Tibial artery (tissue), 4 donors: ENCODE measurements at regions of chr10 and their contacts with region 1.

Region 1: DNA sequence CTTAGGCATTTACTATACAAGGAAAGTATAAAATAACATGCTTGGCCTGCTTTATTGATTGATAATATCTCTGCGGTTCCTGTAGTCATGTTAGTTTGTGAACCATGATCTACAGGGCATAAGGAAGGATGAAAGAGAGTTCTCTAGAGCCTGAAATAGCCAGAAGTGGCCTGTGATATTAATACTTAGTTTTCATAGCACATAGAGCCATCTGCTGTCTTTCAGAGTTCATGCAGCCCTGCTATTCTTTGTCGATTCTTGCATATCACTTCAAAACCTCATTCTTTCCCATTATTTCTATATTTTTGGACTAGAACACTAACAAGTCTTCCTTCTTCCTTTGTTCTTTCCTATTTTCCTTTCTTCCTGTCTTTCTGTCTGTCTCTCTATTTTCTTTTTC is 26.4 kb upstream of the PRKG1 start:
- DNase-seq: no peak
- H3K4me3 ChIP-seq: no peak overlapping the region
- H3K27ac ChIP-seq: peak overlapping the region; percentile 38 to 67
- H3K4me1 ChIP-seq: peaks cover 0 to 98% (median 23%) of the 10 kb centered on the region in 4 donors
- H3K27me3 ChIP-seq: no peaks in the 10 kb centered on the region
- CTCF ChIP-seq: peak; percentile 41 to 47

Region 2: DNA sequence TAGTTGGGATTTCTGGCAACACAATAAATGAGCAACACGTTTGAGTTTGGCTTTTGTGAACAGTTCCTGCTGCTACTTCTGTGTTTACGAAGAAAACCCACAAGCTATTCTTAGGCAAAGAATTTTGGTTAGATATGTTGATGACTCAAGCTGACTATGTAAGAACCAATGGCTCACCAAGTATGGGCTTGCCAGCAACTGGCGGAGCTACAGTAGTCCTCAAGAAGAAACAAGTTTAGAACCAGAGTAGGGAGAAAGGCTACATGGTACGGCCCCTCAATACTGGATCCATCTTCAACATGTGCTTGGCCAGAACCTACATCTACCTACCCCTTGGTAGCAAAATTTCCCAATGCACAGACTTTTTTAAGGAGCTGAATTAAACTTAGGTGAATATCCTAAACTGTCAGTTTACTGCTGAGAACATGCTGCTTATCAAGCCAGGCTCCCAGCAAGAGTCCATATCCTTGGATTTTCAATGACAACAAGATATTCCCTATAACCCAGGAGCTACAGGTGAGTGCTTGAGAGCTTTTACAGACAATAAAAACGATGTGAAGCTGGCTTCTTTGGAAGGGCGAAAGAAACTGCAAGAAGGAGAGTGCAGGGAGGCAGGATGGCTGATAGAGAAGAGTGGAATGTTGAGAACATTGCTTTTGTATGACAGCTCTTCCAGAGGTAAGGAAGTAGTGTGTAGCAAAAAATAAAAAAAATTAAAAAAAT is 722.2 kb before region 1 on chr10:
- intact Hi-C with region 1: no loop called
- DNase-seq: peak; percentile 87
- H3K4me3 ChIP-seq: no peak overlapping the region
- H3K27ac ChIP-seq: peak overlapping the region; percentile 67 to 70
- H3K4me1 ChIP-seq: peaks cover 0 to 59% (median 23%) of the 10 kb centered on the region in 4 donors
- H3K27me3 ChIP-seq: no peaks in the 10 kb centered on the region
- CTCF ChIP-seq: no peak

Region 3: DNA sequence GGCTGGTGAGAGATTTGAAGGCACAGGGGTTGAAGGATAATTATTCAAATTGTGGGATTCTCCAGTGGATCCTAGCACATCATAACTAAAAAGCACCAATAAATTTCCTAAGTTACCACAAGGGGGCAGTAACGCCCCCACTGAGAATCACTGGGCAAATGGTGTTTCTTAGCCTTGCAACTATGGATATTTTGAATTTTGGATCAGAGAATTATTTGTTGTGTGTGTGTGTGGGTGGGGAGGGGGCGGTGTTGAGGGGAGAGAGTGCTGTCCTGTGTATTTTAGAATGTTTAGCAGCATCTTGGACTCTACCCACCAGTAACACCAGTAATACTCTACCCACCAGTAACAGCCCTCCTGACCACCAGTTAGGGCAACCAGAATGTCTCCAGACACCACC is 36.9 kb before region 1 on chr10:
- intact Hi-C with region 1: loop called (anchors 5 kb)
- DNase-seq: no peak
- H3K4me3 ChIP-seq: no peak overlapping the region
- H3K27ac ChIP-seq: peak overlapping the region in 1 of 2 donors; percentile 10
- H3K4me1 ChIP-seq: peaks cover 0 to 65% (median 19%) of the 10 kb centered on the region in 4 donors
- H3K27me3 ChIP-seq: no peaks in the 10 kb centered on the region
- CTCF ChIP-seq: peak; percentile 80 to 81

Region 4: GRCh38 chr10:51311228-51311627 is 263.4 kb after region 1 on chr10:
- intact Hi-C with region 1: no loop called
- DNase-seq: no peak
- H3K4me3 ChIP-seq: no peak overlapping the region
- H3K27ac ChIP-seq: no peak overlapping the region
- H3K4me1 ChIP-seq: peaks cover 0 to 92% (median 26%) of the 10 kb centered on the region in 4 donors
- H3K27me3 ChIP-seq: no peaks in the 10 kb centered on the region
- CTCF ChIP-seq: no peak